ENCODE measurements at regions of chr11 and their contacts with region 1.

Region 1: DNA sequence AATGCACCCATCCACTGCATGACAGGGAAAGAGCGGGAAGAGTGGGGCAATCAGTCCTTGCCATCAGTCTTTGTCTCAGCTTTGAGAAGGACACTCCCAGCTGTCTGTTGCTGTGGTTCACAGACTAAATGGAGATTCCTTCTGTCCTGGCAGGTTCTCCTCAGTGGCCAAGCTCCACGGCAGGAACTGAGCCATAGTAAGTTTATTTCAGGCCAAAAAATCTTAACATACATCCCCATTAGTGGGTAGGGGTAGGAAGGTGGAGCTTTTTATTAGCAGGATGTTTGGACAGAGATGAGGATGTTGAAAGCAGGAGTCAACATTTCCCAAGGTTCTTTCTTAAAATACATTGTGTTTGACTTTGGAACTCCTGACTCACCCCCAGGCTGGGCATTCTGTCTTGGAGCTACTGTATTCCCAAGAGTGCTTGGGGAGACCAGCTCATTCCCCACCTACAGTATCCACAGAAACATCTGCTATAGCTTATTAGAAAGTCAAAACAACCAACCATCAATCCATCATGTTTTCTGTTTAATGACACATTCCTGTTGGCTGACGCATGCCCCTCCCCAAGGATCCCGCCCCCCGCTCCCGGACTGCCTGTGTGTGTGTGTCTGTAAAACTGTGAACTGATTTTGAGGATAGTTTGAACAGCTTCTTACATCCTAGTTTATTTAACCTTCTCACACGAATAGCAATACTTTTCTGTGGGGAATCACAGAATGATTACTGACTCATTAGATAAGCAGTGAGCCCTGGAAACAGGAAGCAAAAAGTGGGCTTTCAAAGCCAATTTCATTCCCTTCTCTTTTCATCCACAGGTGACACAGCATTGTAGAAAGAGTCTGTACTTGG is 109.5 kb downstream of the CCDC81 start:
- DNase-seq: peak; percentile 100
- H3K4me3 ChIP-seq: no peak overlapping the region
- H3K27ac ChIP-seq: peak overlapping the region; percentile 94
- H3K4me1 ChIP-seq: peaks cover 47% of the 10 kb centered on the region
- H3K27me3 ChIP-seq: no peaks in the 10 kb centered on the region
- CTCF ChIP-seq: no peak
- POLR2A ChIP-seq: peak; percentile 39

Region 2: GRCh38 chr11:86395061-86395551 is 89.1 kb before region 1 on chr11:
- CTCF ChIA-PET with region 1: no interaction called
- POLR2A ChIA-PET with region 1: no interaction called
- dilution Hi-C with region 1: no loop called
- intact Hi-C with region 1: no loop called
- DNase-seq: peak; percentile 13
- H3K4me3 ChIP-seq: no peak overlapping the region
- H3K27ac ChIP-seq: no peak overlapping the region
- H3K4me1 ChIP-seq: peaks cover 34% of the 10 kb centered on the region
- H3K27me3 ChIP-seq: no peaks in the 10 kb centered on the region
- CTCF ChIP-seq: no peak
- POLR2A ChIP-seq: no peak

Region 3: GRCh38 chr11:86440305-86440716 is 43.9 kb before region 1 on chr11:
- CTCF ChIA-PET with region 1: no interaction called
- POLR2A ChIA-PET with region 1: no interaction called
- dilution Hi-C with region 1: no loop called
- intact Hi-C with region 1: no loop called
- DNase-seq: no peak
- H3K4me3 ChIP-seq: no peak overlapping the region
- H3K27ac ChIP-seq: no peak overlapping the region
- H3K4me1 ChIP-seq: peaks cover 7% of the 10 kb centered on the region
- H3K27me3 ChIP-seq: no peaks in the 10 kb centered on the region
- CTCF ChIP-seq: no peak
- POLR2A ChIP-seq: no peak

Region 4: GRCh38 chr11:86503131-86503530 is 19.0 kb after region 1 on chr11:
- CTCF ChIA-PET with region 1: interaction called, 4 read pairs
- POLR2A ChIA-PET with region 1: interaction called, 4 read pairs
- dilution Hi-C with region 1: no loop called
- intact Hi-C with region 1: loop called (anchors 1 kb)
- DNase-seq: no peak
- H3K4me3 ChIP-seq: no peak overlapping the region
- H3K27ac ChIP-seq: peak overlapping the region; percentile 38
- H3K4me1 ChIP-seq: peaks cover 10% of the 10 kb centered on the region
- H3K27me3 ChIP-seq: no peaks in the 10 kb centered on the region
- CTCF ChIP-seq: no peak
- POLR2A ChIP-seq: no peak

Region 5: GRCh38 chr11:86559311-86559945 is 75.3 kb after region 1 on chr11:
- CTCF ChIA-PET with region 1: interaction called, 7 read pairs
- POLR2A ChIA-PET with region 1: no interaction called
- dilution Hi-C with region 1: no loop called
- intact Hi-C with region 1: loop called (anchors 2 kb)
- DNase-seq: peak; percentile 79
- H3K4me3 ChIP-seq: no peak overlapping the region
- H3K27ac ChIP-seq: peak overlapping the region; percentile 44
- H3K4me1 ChIP-seq: peaks cover 16% of the 10 kb centered on the region
- H3K27me3 ChIP-seq: no peaks in the 10 kb centered on the region
- CTCF ChIP-seq: no peak
- POLR2A ChIP-seq: no peak

Region 6: DNA sequence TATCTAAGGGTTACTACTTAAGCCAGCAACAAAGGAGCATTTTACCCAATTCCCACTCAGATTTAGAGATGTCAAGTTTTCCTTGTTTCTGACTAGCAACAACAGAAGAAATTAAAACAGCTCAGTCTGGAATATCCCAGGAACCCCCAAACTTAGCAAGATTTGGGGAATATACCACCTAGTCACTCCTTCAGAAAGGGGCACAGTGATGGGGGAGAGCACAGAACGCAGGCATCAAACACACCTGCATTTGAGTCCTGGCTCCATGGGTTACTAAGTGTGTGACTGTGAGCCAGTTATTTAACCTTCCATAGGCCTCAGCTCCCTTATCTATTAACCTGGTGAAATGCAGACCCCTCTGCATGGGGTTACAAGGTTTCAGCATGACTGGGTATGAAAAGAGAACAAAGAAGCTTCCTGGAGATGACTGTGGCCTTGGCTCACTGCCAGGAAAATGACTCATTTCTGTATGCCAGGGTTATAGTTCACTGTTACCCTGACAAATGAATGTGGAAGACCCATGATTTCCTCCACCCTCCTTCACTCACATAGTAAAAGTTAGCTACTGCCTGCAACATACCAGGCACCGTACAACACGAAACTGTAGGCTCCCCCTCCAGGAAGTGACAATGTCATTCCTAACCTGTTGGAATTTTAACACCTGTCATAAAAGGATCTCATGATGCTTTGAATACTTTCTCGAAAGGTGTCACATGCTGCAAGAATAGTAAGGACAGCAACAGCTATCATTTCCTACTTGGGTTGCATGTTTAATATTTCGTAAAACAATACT is 108.7 kb after region 1 on chr11:
- CTCF ChIA-PET with region 1: interaction called, 5 read pairs
- POLR2A ChIA-PET with region 1: interaction called, 6 read pairs
- dilution Hi-C with region 1: loop called (anchors 25 kb)
- intact Hi-C with region 1: loop called (anchors 1 kb)
- DNase-seq: peak; percentile 99
- H3K4me3 ChIP-seq: no peak overlapping the region
- H3K27ac ChIP-seq: peak overlapping the region; percentile 99
- H3K4me1 ChIP-seq: peaks cover 60% of the 10 kb centered on the region
- H3K27me3 ChIP-seq: no peaks in the 10 kb centered on the region
- CTCF ChIP-seq: no peak
- POLR2A ChIP-seq: peak; percentile 12

Region 7: GRCh38 chr11:86740709-86741483 is 256.7 kb after region 1 on chr11:
- CTCF ChIA-PET with region 1: no interaction called
- POLR2A ChIA-PET with region 1: no interaction called
- dilution Hi-C with region 1: no loop called
- intact Hi-C with region 1: loop called (anchors 2 kb)
- DNase-seq: peak; percentile 94
- H3K4me3 ChIP-seq: peak overlapping the region in 1 of 3 experiments; percentile 7
- H3K27ac ChIP-seq: peak overlapping the region; percentile 99
- H3K4me1 ChIP-seq: peaks cover 78% of the 10 kb centered on the region
- H3K27me3 ChIP-seq: no peaks in the 10 kb centered on the region
- CTCF ChIP-seq: no peak
- POLR2A ChIP-seq: no peak

Region 8: DNA sequence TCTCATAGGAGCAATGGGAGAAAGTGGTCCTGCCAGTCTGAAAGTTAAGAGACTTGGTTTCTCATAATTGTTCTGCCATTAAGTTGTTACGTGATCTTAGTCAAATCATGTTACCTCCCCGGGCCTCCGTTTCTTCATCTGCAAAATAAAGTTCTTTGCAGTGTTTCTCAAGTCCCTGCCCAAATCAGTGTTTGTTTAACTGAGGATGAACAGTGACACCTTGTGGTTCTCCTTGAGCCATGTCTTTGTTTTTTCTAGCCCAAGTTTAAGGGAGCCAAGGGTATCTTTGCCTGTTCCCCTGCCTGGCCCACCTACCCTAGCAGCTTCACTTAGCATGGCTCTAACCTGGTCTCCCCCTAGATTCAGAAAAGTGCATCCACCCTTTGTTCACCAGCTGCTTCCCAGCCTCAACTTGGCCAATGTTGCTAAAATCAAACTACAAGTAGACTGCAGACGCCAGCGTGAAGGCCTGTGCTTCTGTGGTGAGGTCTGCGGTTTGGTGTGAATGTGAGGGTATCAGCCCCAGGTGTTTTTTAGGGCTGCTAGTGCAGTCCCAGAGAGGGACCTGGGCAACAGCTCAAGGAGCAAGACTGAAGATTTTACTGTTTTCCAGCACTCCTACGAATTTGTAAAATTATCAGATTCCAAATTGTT is 435.5 kb after region 1 on chr11:
- CTCF ChIA-PET with region 1: interaction called, 4 read pairs
- POLR2A ChIA-PET with region 1: no interaction called
- dilution Hi-C with region 1: no loop called
- intact Hi-C with region 1: loop called (anchors 1 kb)
- DNase-seq: peak; percentile 88
- H3K4me3 ChIP-seq: no peak overlapping the region
- H3K27ac ChIP-seq: peak overlapping the region; percentile 100
- H3K4me1 ChIP-seq: peaks cover 48% of the 10 kb centered on the region
- H3K27me3 ChIP-seq: no peaks in the 10 kb centered on the region
- CTCF ChIP-seq: peak; percentile 60
- POLR2A ChIP-seq: no peak

Measured in endothelial cell of umbilical vein (primary cell).